OCI-LY7 (cell line): ENCODE measurements at regions of chr19 and their contacts with region 1.

Region 1: GRCh38 chr19:19821366-19821951 is at the start of gene ZNF506:
- DNase-seq: peak; percentile 99
- H3K4me3 ChIP-seq: peak within 1 kb of the TSS; percentile 87
- H3K27ac ChIP-seq: peak within 1 kb of the TSS; percentile 76
- H3K4me1 ChIP-seq: peaks cover 4% of the 10 kb centered on the region
- CTCF ChIP-seq: no peak
- total RNA-seq, gene ZNF506: 22.1 and 36.4 TPM in 2 replicates

Region 2: GRCh38 chr19:19865739-19866481 is 44.5 kb after region 1 on chr19 and contains the start of gene ZNF253:
- CTCF ChIA-PET with region 1: no interaction called
- POLR2A ChIA-PET with region 1: interaction called, 24 read pairs
- intact Hi-C with region 1: loop called (anchors 1 kb)
- DNase-seq: peak; percentile 98
- H3K4me3 ChIP-seq: peak within 1 kb of the TSS; percentile 93
- H3K27ac ChIP-seq: peak within 1 kb of the TSS; percentile 89
- H3K4me1 ChIP-seq: peaks cover 20% of the 10 kb centered on the region
- CTCF ChIP-seq: no peak
- total RNA-seq, gene ZNF253: 20.5 and 29.9 TPM in 2 replicates